ENCODE measurements at regions of chr18 and their contacts with region 1.

Region 1: DNA sequence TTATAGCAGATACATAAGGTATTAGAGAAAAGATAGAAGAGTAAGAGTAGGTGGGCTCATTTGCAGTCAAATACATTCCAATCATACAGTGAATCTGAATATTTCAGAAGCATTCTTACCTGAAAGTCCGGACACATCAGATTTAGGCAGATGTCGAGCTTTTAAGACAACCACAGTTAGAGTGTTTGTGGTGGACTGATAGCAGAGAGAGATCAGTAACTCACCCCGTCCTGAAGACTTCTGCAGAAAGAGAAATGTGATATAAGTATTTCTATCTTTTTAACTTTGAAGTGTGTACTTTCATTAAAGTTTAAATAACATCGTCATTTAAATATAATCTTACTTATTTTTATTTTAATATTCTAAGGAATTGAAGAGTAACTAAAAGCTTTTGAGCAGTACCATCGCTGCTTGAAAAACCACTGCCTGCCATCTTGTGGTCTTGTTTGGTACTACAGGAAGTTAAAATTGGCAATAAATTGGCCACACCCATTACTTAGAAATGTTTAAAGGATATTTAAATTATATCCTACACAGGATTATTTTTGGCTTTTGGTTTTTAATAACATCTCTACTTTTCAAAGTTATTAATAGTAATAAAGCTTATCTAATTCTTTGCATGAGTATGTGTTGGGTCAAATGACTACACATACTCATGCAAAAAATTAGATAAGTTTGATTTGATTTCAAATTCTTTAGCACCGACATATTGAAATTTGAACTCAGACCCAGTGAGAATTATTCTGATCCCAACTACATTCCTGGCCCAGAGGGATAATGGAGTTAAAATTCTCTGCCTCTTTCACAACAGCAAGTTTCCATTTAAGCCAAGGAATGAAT is 5.5 kb downstream of the SYT4 start:
- DNase-seq: peak; percentile 32
- H3K4me3 Mint-ChIP-seq: no peak overlapping the region
- H3K27ac Mint-ChIP-seq: no peak overlapping the region
- H3K4me1 Mint-ChIP-seq: no peaks in the 10 kb centered on the region
- H3K27me3 Mint-ChIP-seq: no peaks in the 10 kb centered on the region

Region 2: DNA sequence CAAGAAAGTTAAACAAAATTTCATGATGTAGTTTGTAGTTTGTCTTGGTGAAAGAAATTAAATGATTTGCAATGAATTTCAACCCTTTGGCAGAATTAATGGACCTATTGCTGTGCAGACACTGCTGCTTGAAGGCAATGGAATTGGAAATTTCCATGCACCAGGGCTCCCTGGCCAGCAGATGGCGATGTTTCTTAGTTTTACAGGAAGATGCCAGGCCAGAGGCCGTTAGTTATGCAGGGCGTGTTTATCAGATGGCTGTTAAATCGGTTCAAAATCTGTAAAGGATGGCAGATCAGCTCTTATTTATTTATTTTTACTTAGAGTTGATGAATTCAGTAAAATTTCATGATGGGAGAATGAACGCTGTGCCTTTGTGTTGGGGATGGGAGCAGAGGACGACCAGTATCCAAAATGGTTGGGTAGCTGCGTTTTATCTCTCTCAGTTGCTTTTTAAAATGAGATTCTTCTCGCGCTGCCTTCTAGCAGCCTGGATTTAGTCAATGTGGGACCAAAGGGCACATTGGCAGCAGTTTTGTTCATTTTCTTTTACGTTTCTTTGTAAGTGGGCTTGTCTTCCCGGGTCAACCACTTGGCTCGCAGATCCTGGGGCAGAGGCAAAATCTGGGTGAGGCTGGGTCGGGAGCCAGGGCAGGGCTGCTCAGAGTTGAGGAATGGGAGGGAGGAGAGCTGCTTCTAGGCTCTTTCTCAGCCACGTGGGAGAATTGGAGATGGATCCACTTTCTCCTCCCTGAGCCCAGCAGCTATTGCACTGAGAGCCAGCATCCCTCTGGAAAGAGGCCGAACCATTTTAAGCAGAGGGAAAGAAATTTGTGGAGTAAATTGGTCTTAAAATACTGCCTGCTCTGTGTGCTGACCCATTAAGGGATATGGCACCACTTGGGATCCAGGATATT is 972.8 kb before region 1 on chr18:
- CTCF ChIA-PET with region 1: interaction called, 10 read pairs
- DNase-seq: peak; percentile 63
- H3K4me3 Mint-ChIP-seq: no peak overlapping the region
- H3K27ac Mint-ChIP-seq: no peak overlapping the region
- H3K4me1 Mint-ChIP-seq: no peaks in the 10 kb centered on the region
- H3K27me3 Mint-ChIP-seq: no peaks in the 10 kb centered on the region

Region 3: GRCh38 chr18:43013486-43013885 is 258.3 kb before region 1 on chr18:
- CTCF ChIA-PET with region 1: no interaction called
- DNase-seq: no peak
- H3K4me3 Mint-ChIP-seq: no peak overlapping the region
- H3K27ac Mint-ChIP-seq: no peak overlapping the region
- H3K4me1 Mint-ChIP-seq: no peaks in the 10 kb centered on the region
- H3K27me3 Mint-ChIP-seq: no peaks in the 10 kb centered on the region

Region 4: DNA sequence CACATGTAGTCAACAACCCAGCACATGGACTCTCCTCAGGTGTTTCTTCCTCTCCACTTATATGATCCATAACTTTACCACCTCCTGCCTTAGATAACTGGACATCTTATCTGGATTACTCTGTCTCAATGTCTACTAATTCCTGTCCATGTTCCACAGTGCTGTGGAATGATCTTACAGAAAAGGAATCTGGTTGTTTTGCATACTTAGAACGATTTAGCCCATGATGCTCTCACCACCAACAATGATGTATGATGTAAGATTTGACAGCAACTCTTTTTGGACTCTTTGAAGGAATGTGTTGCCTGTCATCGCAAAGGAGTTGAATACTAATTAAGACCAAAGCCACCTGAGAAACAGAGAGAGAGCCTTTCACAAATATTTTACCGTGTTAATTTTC is 43.1 kb after region 1 on chr18:
- CTCF ChIA-PET with region 1: no interaction called
- DNase-seq: no peak
- H3K4me3 Mint-ChIP-seq: no peak overlapping the region
- H3K27ac Mint-ChIP-seq: no peak overlapping the region
- H3K4me1 Mint-ChIP-seq: no peaks in the 10 kb centered on the region
- H3K27me3 Mint-ChIP-seq: no peaks in the 10 kb centered on the region